Psoas muscle (tissue), 8 donors: ENCODE measurements at regions of chr21 and their contacts with region 1.

Region 1: DNA sequence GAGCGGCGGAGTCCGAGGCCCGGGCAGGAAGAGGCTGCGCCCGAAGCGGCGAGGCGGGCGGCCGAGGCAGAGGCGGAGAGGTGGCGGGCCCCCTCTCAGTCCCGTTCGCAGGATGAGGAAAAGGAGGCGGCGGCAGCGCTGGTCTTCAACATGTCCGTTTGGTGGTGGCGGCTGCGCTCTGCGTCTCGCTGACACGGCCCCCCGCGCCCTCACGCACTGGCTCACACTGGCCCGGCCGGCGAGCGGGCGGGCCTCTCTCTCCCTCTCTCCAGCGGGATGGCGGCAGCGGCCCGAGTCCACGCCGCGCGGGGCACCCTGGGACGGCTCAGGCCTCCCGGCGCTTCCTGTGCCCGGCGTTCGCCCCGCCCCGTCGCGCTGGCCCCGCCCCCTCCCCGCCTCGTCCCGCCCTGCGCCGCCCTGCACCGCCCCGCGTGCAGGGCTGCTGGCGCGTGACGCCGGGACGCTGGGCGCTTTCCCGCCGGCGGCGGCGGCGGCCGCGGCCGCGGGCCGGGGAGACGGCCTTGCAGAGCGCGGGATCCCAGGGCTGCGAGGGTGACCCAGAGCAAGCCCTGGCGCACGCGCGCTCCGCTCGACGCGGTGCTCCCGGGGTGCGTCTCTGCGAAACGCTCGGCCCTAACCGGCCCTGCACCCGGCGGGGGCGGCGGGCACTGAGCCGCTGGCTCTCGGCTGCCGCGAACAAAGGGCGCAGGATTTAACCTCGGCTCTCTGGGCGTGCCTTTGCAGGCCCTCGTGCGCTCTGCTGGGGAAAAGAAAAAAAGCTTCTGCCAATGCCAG is at the start of gene SCAF4:
- DNase-seq: peak; percentile 92 to 96
- ATAC-seq: peak; percentile 93 to 94 (median 94)
- H3K4me3 ChIP-seq: peak within 1 kb of the TSS; percentile 98
- H3K27ac ChIP-seq: peak within 1 kb of the TSS; percentile 99
- H3K4me1 ChIP-seq: peaks cover 41% of the 10 kb centered on the region
- H3K27me3 ChIP-seq: no peaks in the 10 kb centered on the region
- CTCF ChIP-seq: no peak
- total RNA-seq, gene SCAF4: 17.3 to 23.9 (median 23.5) TPM

Region 2: DNA sequence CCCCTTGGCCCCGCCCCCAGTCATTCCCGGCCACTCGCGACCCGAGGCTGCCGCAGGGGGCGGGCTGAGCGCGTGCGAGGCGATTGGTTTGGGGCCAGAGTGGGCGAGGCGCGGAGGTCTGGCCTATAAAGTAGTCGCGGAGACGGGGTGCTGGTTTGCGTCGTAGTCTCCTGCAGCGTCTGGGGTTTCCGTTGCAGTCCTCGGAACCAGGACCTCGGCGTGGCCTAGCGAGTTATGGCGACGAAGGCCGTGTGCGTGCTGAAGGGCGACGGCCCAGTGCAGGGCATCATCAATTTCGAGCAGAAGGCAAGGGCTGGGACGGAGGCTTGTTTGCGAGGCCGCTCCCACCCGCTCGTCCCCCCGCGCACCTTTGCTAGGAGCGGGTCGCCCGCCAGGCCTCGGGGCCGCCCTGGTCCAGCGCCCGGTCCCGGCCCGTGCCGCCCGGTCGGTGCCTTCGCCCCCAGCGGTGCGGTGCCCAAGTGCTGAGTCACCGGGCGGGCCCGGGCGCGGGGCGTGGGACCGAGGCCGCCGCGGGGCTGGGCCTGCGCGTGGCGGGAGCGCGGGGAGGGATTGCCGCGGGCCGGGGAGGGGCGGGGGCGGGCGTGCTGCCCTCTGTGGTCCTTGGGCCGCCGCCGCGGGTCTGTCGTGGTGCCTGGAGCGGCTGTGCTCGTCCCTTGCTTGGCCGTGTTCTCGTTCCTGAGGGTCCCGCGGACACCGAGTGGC is 72.3 kb before region 1 on chr21 and contains the start of gene SOD1:
- intact Hi-C with region 1: loop called in 1 of 2 experiments (anchors 2 kb)
- DNase-seq: peak; percentile 96 to 97
- ATAC-seq: peak; percentile 98 to 99 (median 98)
- H3K4me3 ChIP-seq: peak within 1 kb of the TSS; percentile 87
- H3K27ac ChIP-seq: peak within 1 kb of the TSS; percentile 86
- H3K4me1 ChIP-seq: peaks cover 24% of the 10 kb centered on the region
- H3K27me3 ChIP-seq: no peaks in the 10 kb centered on the region
- CTCF ChIP-seq: peak; percentile 8
- total RNA-seq, gene SOD1: 226 to 326 (median 285) TPM

Region 3: GRCh38 chr21:31798842-31799704 is 67.1 kb after region 1 on chr21:
- intact Hi-C with region 1: loop called in 1 of 2 experiments (anchors 10 kb)
- DNase-seq: no peak
- ATAC-seq: no peak
- H3K4me3 ChIP-seq: no peak overlapping the region
- H3K27ac ChIP-seq: no peak overlapping the region
- H3K4me1 ChIP-seq: no peaks in the 10 kb centered on the region
- H3K27me3 ChIP-seq: peaks cover 0 to 31% (median 2%) of the 10 kb centered on the region in 3 donors
- CTCF ChIP-seq: no peak

Region 4: GRCh38 chr21:32612075-32612998 is 880.3 kb after region 1 on chr21 and contains the start of gene CFAP298:
- intact Hi-C with region 1: loop called in 1 of 2 experiments (anchors 5 kb)
- DNase-seq: peak; percentile 87 to 94
- ATAC-seq: peak; percentile 92 to 97 (median 94)
- H3K4me3 ChIP-seq: peak within 1 kb of the TSS; percentile 79
- H3K27ac ChIP-seq: peak within 1 kb of the TSS; percentile 73
- H3K4me1 ChIP-seq: peaks cover 4% of the 10 kb centered on the region
- H3K27me3 ChIP-seq: no peaks in the 10 kb centered on the region
- CTCF ChIP-seq: no peak
- total RNA-seq, gene CFAP298: 24.6 to 31.6 (median 26.0) TPM